ENCODE measurements at regions of chr9 and their contacts with region 1.

Region 1: DNA sequence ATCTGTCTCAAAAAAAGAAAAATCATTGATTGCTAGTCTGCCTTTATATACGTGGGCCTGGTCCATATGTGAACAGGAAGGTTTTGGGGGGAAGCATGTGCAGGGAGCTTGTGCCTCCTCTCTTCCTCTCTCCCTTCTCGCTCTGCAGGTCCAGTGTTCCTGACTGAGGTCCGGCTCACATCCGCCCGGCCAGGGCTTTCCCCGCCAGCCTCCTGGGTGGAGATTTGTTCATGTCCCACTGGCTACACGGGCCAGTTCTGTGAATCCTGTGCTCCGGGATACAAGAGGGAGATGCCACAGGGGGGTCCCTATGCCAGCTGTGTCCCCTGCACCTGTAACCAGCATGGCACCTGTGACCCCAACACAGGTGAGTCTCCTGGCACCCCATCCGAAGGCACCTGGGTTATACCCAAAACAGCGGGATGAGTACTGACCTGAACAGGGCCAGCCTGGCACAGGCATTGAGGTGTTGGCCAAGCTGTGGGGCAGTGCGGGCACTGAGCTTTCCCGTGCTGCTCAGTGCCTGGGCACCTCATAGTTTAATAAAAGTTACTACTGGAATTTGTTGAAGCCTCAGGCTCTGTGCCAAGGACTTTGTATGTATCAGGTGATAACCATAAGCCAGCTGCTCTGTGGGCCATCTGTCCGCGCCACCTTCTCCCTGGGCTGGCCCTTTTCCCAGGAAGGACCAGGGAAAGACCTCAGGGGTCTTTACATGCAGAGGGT is 39.4 kb upstream of the AIF1L start:
- DNase-seq: no peak
- H3K4me3 Mint-ChIP-seq: no peak overlapping the region
- H3K27ac Mint-ChIP-seq: no peak overlapping the region
- H3K4me1 Mint-ChIP-seq: no peaks in the 10 kb centered on the region
- H3K27me3 Mint-ChIP-seq: no peaks in the 10 kb centered on the region

Region 2: GRCh38 chr9:130973169-130973936 is 83.6 kb before region 1 on chr9:
- CTCF ChIA-PET with region 1: no interaction called
- POLR2A ChIA-PET with region 1: no interaction called
- DNase-seq: no peak
- H3K4me3 Mint-ChIP-seq: no peak overlapping the region
- H3K27ac Mint-ChIP-seq: no peak overlapping the region
- H3K4me1 Mint-ChIP-seq: no peaks in the 10 kb centered on the region
- H3K27me3 Mint-ChIP-seq: peaks cover 6% of the 10 kb centered on the region

Region 3: DNA sequence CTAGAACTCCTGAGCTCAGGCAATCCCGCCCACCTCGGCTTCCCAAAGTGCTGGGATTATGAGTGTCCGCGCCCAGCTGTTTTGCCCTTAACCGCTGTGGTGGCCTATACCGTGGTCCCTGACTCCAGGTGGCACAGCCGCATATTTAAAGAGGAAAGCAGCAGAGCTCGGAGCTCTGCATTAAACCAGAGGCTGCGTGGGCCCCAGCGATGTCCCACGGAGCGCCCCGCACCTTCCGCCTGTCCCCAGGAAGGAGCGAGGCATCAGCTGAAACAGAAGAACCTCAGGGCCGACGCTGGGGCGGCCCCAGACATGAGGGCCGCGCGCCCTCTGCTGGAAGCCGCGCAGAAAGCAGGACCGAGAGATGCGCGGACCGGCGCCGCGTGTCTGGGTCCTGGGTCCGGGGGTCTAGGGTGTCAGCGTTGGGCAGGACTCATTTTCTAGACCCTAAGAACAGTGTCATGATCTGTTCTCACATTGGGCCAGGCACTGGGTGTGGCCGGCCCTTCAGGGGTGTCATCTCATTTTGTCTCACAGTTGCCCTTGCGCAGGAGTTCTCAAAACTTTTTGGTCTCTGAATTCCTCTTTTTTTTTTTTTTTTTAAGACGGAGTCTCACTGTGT is 10.3 kb before region 1 on chr9:
- CTCF ChIA-PET with region 1: interaction called, 36 read pairs
- POLR2A ChIA-PET with region 1: no interaction called
- DNase-seq: peak; percentile 75
- H3K4me3 Mint-ChIP-seq: no peak overlapping the region
- H3K27ac Mint-ChIP-seq: no peak overlapping the region
- H3K4me1 Mint-ChIP-seq: peaks cover 5% of the 10 kb centered on the region
- H3K27me3 Mint-ChIP-seq: no peaks in the 10 kb centered on the region

Region 4: GRCh38 chr9:131187957-131188356 is 131.0 kb after region 1 on chr9:
- CTCF ChIA-PET with region 1: no interaction called
- POLR2A ChIA-PET with region 1: no interaction called
- DNase-seq: no peak
- H3K4me3 Mint-ChIP-seq: no peak overlapping the region
- H3K27ac Mint-ChIP-seq: no peak overlapping the region
- H3K4me1 Mint-ChIP-seq: peaks cover 3% of the 10 kb centered on the region
- H3K27me3 Mint-ChIP-seq: no peaks in the 10 kb centered on the region